ENCODE measurements at regions of chr19 and their contacts with region 1.

Region 1: GRCh38 chr19:52048555-52049501 is at the start of gene ZNF432:
- DNase-seq: peak; percentile 64
- ATAC-seq: peak; percentile 96
- H3K4me3 ChIP-seq: peak within 1 kb of the TSS; percentile 76
- H3K27ac ChIP-seq: peak within 1 kb of the TSS; percentile 97
- H3K4me1 ChIP-seq: no peaks in the 10 kb centered on the region
- H3K27me3 ChIP-seq: no peaks in the 10 kb centered on the region
- CTCF ChIP-seq: no peak
- EP300 ChIP-seq: 0 out of 4 replicates have a peak, but pooled peaks of 1 of the 2 experiments have one; percentile 15
- POLR2A ChIP-seq: peak; percentile 86
- RAD21 ChIP-seq: no peak
- polyA plus RNA-seq, gene ZNF432: 1.7 to 2.3 TPM

Region 2: GRCh38 chr19:51926784-51927742 is 121.8 kb before region 1 on chr19 and contains the start of gene ZNF613:
- CTCF ChIA-PET with region 1: no interaction called
- POLR2A ChIA-PET with region 1: no interaction called
- RAD21 ChIA-PET with region 1: no interaction called
- SMC1A ChIA-PET with region 1: no interaction called
- in situ Hi-C with region 1: no loop called
- intact Hi-C with region 1: loop called (anchors 10 kb)
- DNase-seq: peak; percentile 89
- ATAC-seq: peak; percentile 97
- H3K4me3 ChIP-seq: peak within 1 kb of the TSS; percentile 77
- H3K27ac ChIP-seq: peak within 1 kb of the TSS; percentile 70
- H3K4me1 ChIP-seq: 0 out of 2 replicates have a peak, but pooled peaks cover 2% of the 10 kb centered on the region
- H3K27me3 ChIP-seq: no peaks in the 10 kb centered on the region
- CTCF ChIP-seq: peak in 2 of 3 experiments; percentile 5 to 22; a peak in 1 of 6 replicates
- EP300 ChIP-seq: no peak
- POLR2A ChIP-seq: peak; percentile 24
- RAD21 ChIP-seq: no peak
- polyA plus RNA-seq, gene ZNF613: 3.3 to 5.1 TPM

Region 3: GRCh38 chr19:52028027-52028779 is 20.6 kb before region 1 on chr19 and contains the start of gene ZNF614:
- CTCF ChIA-PET with region 1: interaction called, 3 read pairs
- POLR2A ChIA-PET with region 1: no interaction called
- RAD21 ChIA-PET with region 1: interaction called, 7 read pairs
- SMC1A ChIA-PET with region 1: interaction called, 3 read pairs
- in situ Hi-C with region 1: no loop called
- intact Hi-C with region 1: loop called (anchors 1 kb)
- DNase-seq: peak; percentile 49
- ATAC-seq: peak; percentile 94
- H3K4me3 ChIP-seq: peak within 1 kb of the TSS; percentile 87
- H3K27ac ChIP-seq: peak within 1 kb of the TSS; percentile 79
- H3K4me1 ChIP-seq: no peaks in the 10 kb centered on the region; the same call in 1 of the 2 replicates
- H3K27me3 ChIP-seq: no peaks in the 10 kb centered on the region
- CTCF ChIP-seq: no peak
- EP300 ChIP-seq: 0 out of 4 replicates have a peak, but pooled peaks of 1 of the 2 experiments have one; percentile 30
- POLR2A ChIP-seq: peak; percentile 98
- RAD21 ChIP-seq: no peak
- polyA plus RNA-seq, gene ZNF614: 3.9 to 5.3 TPM

Measured in GM12878 (cell line).